Heart right ventricle (tissue), 16 donors: ENCODE measurements at regions of chr17 and their contacts with region 1.

Region 1: DNA sequence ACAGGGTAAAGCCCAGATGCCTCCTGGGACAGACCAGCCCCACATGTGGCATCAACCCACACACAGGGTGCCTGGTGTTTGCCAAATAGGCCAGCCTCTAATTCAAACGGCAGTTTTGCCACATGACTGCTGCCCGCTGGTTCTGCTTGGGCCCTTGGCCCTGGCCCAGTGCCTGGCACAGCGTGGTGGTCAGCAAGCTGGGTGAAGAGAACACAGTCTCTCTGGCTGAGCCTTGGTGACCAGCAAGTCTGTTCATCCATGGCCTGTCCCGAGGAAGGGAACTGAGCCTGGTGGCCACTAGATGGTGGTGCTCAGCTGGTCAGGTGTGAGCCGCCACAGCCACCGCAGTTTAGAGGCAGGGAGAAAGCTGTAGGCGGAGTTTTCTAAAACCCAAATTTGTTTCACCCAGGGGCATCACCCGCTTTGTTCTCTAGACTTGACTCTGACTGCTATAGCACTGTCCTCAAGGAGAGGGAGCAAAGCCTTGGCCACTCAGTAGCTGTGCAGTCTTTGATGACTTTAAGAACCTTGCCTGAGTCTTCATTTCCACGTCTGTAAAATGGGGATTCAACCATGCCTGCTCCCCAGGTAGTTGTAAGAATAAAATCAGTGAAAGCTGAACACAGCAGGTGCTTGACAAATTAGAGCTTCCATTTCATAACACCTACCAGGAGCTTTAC is 4.7 kb upstream of the GFAP start:
- DNase-seq: peak; percentile 78 to 80
- ATAC-seq: peak; percentile 71 to 91 (median 84)
- H3K4me3 ChIP-seq: no peak overlapping the region
- H3K27ac ChIP-seq: peak overlapping the region in 7 of 10 donors; percentile 32 to 64 (median 44)
- H3K4me1 ChIP-seq: peaks cover 4 to 48% (median 28%) of the 10 kb centered on the region in 9 donors
- H3K27me3 ChIP-seq: peaks cover 0 to 15% (median 0%) of the 10 kb centered on the region in 7 donors
- CTCF ChIP-seq: peak; percentile 70 to 94 (median 84)

Region 2: GRCh38 chr17:44968226-44969143 is 48.5 kb after region 1 on chr17 and contains the start of gene C1QL1:
- intact Hi-C with region 1: loop called in 3 of 10 experiments (anchors 2 to 5 kb)
- DNase-seq: peak; percentile 91 to 94
- ATAC-seq: peak; percentile 95 to 99 (median 97)
- H3K4me3 ChIP-seq: peak within 1 kb of the TSS in 9 of 10 donors; percentile 34 to 57 (median 48)
- H3K27ac ChIP-seq: no peak within 1 kb of the TSS
- H3K4me1 ChIP-seq: peaks cover 6 to 35% (median 26%) of the 10 kb centered on the region in 9 donors
- H3K27me3 ChIP-seq: peaks cover 26 to 94% (median 57%) of the 10 kb centered on the region in 7 donors
- CTCF ChIP-seq: peak in 2 of 9 donors; percentile 24 to 33
- total RNA-seq, gene C1QL1: 0.37 to 25.6 (median 1.1) TPM

Region 3: DNA sequence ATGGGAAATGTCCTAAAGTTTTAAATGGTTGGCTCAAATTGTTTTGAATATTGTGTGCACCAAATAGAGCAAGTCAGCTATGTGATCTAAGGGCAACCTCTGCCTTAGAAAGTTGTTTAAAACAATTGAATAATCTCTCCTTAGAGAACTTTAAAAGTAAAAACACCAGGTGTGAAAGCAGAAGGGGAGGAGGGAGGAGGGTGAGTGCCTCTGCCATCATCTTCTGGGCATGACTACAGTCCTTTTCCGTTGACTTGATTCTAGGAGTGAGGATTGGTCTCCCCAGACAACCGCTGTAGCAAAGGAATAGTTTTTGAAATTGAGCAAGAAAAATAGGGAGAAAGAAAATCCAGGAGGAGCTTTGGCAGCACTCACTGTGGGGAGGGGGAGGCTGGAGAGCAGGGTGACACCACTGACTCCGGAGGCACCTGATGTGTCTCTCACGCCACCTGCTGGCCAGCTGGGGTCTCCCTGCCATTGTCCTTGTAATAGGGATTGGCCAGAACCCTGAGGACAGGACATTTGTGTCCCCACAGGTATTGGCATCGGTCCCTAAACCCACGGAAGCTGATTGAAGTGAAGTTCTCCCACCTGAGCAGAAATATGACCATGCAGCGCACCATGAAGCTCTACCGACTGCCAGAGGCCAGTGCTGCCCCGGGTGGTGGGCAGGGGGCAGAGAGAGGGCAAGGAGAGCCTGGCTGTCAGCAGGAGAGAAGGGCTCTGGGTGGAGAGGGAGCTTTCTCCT is 179.0 kb after region 1 on chr17:
- intact Hi-C with region 1: loop called in 9 of 10 experiments (anchors 2 to 10 kb)
- DNase-seq: peak; percentile 87 to 88
- ATAC-seq: peak; percentile 70 to 86 (median 78)
- H3K4me3 ChIP-seq: no peak overlapping the region
- H3K27ac ChIP-seq: peak overlapping the region in 7 of 10 donors; percentile 6 to 53 (median 18)
- H3K4me1 ChIP-seq: peaks cover 4 to 55% (median 23%) of the 10 kb centered on the region in 9 donors
- H3K27me3 ChIP-seq: no peaks in the 10 kb centered on the region
- CTCF ChIP-seq: peak; percentile 79 to 94 (median 92)

Region 4: GRCh38 chr17:45197555-45198334 is 277.7 kb after region 1 on chr17:
- intact Hi-C with region 1: loop called in 2 of 10 experiments (anchors 10 kb)
- DNase-seq: peak; percentile 91 to 96
- ATAC-seq: peak; percentile 95 to 100 (median 98)
- H3K4me3 ChIP-seq: peak overlapping the region in 1 of 10 donors; percentile 1
- H3K27ac ChIP-seq: peak overlapping the region in 7 of 10 donors; percentile 36 to 65 (median 48)
- H3K4me1 ChIP-seq: peaks cover 0 to 23% (median 10%) of the 10 kb centered on the region in 9 donors
- H3K27me3 ChIP-seq: no peaks in the 10 kb centered on the region
- CTCF ChIP-seq: peak; percentile 98 to 100 (median 99)